Left ventricle myocardium superior (tissue), 1 donor: ENCODE measurements at regions of chr6 and their contacts with region 1.

Region 1: GRCh38 chr6:99151634-99152344 is 197.7 kb downstream of the FAXC start:
- DNase-seq: peak; percentile 49
- ATAC-seq: peak; percentile 48

Region 2: GRCh38 chr6:99047447-99047846 is 104.3 kb before region 1 on chr6:
- intact Hi-C with region 1: no loop called
- DNase-seq: no peak
- ATAC-seq: no peak

Region 3: DNA sequence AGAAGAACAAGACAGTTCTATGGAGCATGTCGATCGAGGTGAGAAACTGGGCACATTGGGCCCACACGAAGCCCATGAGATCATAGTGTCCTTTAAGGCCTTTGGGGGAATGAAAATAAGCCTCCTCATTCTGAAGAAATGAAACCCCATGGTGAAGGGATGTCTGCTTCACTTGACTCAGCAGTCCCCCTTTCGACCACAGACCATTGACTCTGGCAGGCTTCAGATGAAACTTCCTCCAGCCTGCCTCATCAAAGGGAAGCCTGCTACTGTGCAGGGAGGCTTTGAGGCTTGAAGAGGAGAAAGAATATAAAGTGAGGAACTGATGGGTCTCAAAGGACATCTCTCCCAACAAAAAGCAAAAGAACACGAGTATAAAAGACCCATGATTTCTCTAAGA is 59.8 kb before region 1 on chr6:
- intact Hi-C with region 1: no loop called
- DNase-seq: no peak
- ATAC-seq: no peak

Region 4: DNA sequence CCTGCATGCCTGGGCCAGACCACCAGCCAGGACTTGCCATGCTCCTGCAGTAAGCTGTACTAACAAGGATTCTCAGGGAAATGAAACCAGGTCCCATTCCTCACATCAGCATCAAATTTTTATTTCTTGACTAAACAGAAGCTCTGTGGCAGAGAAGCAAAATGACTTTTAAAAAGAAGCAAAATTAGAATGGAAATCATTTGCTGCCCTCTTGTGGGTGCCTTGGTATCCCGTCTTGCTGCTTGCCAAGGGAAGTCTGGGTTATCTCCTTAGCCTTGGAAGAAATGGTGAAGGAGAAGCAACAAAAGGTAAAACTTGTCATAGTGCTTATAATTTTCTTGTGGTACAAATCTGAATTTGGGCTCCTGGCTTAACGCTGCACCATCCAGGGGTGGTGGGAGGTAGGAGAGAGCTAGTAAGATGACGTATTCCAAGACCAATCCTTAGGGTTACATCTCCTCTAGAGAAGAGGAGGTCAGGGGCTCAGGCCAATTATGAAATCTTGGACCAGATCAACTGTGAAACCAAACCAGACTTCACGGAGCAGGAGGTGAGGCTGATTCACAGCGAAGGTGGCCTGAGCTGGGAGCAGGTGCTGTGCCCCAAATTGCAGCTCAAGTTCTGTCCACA is 90.2 kb after region 1 on chr6:
- intact Hi-C with region 1: loop called (anchors 10 kb)
- DNase-seq: no peak
- ATAC-seq: no peak